ENCODE measurements at regions of chr12 and their contacts with region 1.

Region 1: DNA sequence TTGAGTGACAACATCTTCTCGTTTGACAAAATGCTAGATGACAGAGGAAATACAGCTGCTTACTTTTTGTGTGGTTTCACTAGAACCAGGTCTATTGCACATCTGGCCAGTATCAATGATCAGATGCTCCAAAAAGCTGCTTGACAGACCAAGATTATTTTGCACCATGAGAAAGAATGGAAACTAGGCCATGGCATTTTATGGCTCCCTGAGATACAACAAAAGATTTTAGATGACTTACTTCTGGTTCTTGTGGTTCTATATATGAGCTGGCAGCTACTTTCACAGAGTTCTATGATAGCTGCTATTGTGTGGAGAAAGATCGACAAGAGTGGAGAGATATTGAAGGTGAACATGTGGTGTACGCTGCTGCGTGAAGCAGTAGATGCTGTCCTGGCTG is 25.9 kb upstream of the PPFIBP1 start:
- DNase-seq: peak; percentile 16
- H3K4me3 Mint-ChIP-seq: peak overlapping the region; percentile 3
- H3K27ac Mint-ChIP-seq: peak overlapping the region; percentile 76
- H3K4me1 Mint-ChIP-seq: peaks cover 53% of the 10 kb centered on the region
- H3K27me3 Mint-ChIP-seq: no peaks in the 10 kb centered on the region

Region 2: GRCh38 chr12:26701604-26702215 is 796.4 kb before region 1 on chr12:
- intact Hi-C with region 1: no loop called
- DNase-seq: no peak
- H3K4me3 Mint-ChIP-seq: no peak overlapping the region
- H3K27ac Mint-ChIP-seq: no peak overlapping the region
- H3K4me1 Mint-ChIP-seq: peaks cover 9% of the 10 kb centered on the region
- H3K27me3 Mint-ChIP-seq: no peaks in the 10 kb centered on the region

Region 3: GRCh38 chr12:27523642-27524493 is 25.7 kb after region 1 on chr12 and contains the start of gene PPFIBP1:
- intact Hi-C with region 1: loop called (anchors 1 kb)
- DNase-seq: peak; percentile 83
- H3K4me3 Mint-ChIP-seq: peak within 1 kb of the TSS; percentile 89
- H3K27ac Mint-ChIP-seq: peak within 1 kb of the TSS; percentile 90
- H3K4me1 Mint-ChIP-seq: peaks cover 56% of the 10 kb centered on the region
- H3K27me3 Mint-ChIP-seq: peaks cover 19% of the 10 kb centered on the region
- total RNA-seq, gene PPFIBP1: 53.8 and 55.7 TPM in 2 replicates

Region 4: GRCh38 chr12:27555925-27556778 is 58.0 kb after region 1 on chr12:
- intact Hi-C with region 1: loop called (anchors 2 kb)
- DNase-seq: no peak
- H3K4me3 Mint-ChIP-seq: no peak overlapping the region
- H3K27ac Mint-ChIP-seq: no peak overlapping the region
- H3K4me1 Mint-ChIP-seq: peaks cover 42% of the 10 kb centered on the region
- H3K27me3 Mint-ChIP-seq: peaks cover 7% of the 10 kb centered on the region

Region 5: DNA sequence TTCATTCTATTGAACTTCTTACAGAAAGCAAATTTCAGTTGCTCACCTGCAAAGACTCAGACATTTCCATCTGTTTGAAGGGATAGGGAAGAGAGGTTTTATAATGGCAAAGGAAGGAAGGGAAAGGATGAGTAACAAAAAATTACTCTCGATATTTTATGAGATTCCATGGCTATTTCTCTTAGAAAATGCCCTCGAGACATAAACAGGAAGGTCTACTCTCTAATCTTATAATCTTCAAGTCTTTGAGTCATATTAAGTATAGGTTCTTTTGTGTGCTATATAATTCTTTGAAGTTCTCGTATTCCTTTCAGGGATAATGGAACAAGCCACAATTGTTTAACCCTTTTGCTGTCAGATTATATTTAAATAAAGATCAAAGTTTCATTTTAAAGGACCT is 274.5 kb after region 1 on chr12:
- intact Hi-C with region 1: no loop called
- DNase-seq: no peak
- H3K4me3 Mint-ChIP-seq: no peak overlapping the region
- H3K27ac Mint-ChIP-seq: no peak overlapping the region
- H3K4me1 Mint-ChIP-seq: peaks cover 8% of the 10 kb centered on the region
- H3K27me3 Mint-ChIP-seq: peaks cover 28% of the 10 kb centered on the region

Measured in activated T-helper 1 cell treated with anti-CD3 and anti-CD28 coated beads, Interleukin-12 subunit alpha, Interleukin-12 subunit beta, Interleukin-2, Interleukin-4 antibody, amounts not matched to agents 30 ng/mL and 10 ng/mL and 1 ng/mL, durations not matched to agents 14 hours and 24 hours and 36 hours (primary cell).